Heart right ventricle (tissue), 16 donors: ENCODE measurements at regions of chr2 and their contacts with region 1.

Region 1: GRCh38 chr2:218236829-218237228 is 19.8 kb downstream of the ARPC2 start:
- DNase-seq: no peak
- ATAC-seq: no peak
- H3K4me3 ChIP-seq: no peak overlapping the region
- H3K27ac ChIP-seq: no peak overlapping the region
- H3K4me1 ChIP-seq: peaks cover 0 to 15% (median 9%) of the 10 kb centered on the region in 9 donors
- H3K27me3 ChIP-seq: no peaks in the 10 kb centered on the region
- CTCF ChIP-seq: no peak

Region 2: DNA sequence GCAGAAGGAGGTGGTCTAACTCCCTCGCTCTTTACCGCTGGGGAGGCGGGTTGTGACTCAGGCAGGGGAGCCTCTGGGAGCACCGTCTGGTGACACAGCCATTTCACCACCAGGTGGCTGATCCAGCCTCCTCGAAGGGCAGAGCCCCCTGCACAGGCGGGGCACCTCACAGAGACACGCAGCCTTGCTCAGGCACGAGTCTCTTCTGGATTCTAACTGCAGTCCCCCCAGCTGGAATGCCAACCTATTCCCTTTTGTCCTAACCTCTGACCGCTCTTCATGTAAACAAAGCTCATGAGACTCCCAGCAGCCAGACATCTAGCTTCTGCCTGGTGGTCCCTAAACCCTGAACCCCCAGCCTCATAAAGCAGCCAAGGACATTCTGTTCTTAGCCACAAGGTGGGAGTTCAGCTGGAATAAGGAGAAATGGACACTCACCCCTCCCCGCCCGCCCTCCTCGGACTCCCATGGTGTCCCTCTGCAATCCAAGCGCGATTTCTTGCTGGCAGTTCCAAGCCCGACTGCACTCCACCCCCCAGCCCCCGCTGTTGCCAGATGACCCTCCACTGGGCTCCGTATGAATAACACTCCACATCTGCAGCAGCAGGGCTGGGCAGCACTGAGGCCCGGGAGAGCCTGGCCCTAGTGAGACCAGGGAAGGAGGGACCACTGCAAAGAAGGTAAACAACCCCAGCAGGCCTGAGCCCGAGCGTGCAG is 318.4 kb before region 1 on chr2:
- intact Hi-C with region 1: no loop called
- DNase-seq: no peak
- ATAC-seq: no peak
- H3K4me3 ChIP-seq: no peak overlapping the region
- H3K27ac ChIP-seq: peak overlapping the region; percentile 83 to 99 (median 95)
- H3K4me1 ChIP-seq: peaks cover 71 to 100% (median 100%) of the 10 kb centered on the region in 9 donors
- H3K27me3 ChIP-seq: no peaks in the 10 kb centered on the region
- CTCF ChIP-seq: peak in 8 of 9 donors; percentile 6 to 47 (median 36)

Region 3: DNA sequence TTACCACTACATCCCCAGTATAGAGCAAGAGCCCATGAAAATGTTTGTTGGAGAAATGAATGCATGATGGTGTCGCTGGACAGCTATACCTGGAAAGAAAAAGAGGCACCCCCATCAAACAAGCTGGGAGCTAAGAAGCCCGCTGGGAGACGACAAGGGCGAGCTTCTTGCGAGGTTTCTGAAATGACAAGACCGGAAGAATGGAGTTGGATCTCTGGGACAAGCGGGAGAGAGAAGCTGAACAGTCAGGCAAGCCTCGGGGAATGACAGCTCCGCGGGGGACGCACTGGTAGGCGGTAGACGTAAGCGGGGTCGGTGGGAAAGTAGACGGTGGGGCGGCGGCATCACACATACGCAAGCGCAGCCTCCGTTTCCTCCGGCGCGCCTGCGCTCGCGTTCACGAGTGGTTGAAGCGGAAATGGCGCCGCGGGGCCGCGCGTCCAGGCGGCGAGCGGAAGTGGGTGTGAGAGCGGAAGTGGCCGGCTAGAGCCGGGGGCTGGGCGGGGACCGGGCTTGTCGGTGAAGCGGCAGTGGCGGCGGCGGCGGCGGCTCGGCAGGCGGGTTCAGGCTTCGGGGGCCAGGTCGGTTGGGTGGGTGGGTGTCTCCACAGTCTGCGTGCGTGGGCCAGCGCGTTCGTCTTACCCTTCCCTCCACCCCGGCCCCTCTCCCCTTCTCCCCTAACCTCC is 20.0 kb before region 1 on chr2 and contains the start of gene ARPC2:
- intact Hi-C with region 1: loop called in 1 of 10 experiments (anchors 1 kb)
- DNase-seq: peak; percentile 95 to 96
- ATAC-seq: peak; percentile 97 to 99 (median 98)
- H3K4me3 ChIP-seq: peak within 1 kb of the TSS; percentile 78 to 97 (median 94)
- H3K27ac ChIP-seq: peak within 1 kb of the TSS; percentile 58 to 99 (median 94)
- H3K4me1 ChIP-seq: peaks cover 11 to 53% (median 44%) of the 10 kb centered on the region in 9 donors
- H3K27me3 ChIP-seq: no peaks in the 10 kb centered on the region
- CTCF ChIP-seq: peak in 2 of 9 donors; percentile 5 to 20
- total RNA-seq, gene ARPC2: 120 to 213 (median 134) TPM